HepG2 (cell line): ENCODE measurements at regions of chr5 and their contacts with region 1.

Region 1: GRCh38 chr5:117859176-117859575 is 1129.2 kb downstream of the DTWD2 start:
- DNase-seq: no peak
- ATAC-seq: no peak
- H3K4me3 ChIP-seq: no peak overlapping the region
- H3K27ac ChIP-seq: no peak overlapping the region
- H3K4me1 ChIP-seq: no peaks in the 10 kb centered on the region
- H3K27me3 ChIP-seq: no peaks in the 10 kb centered on the region
- CTCF ChIP-seq: no peak
- EP300 ChIP-seq: no peak
- POLR2A ChIP-seq: no peak
- RAD21 ChIP-seq: no peak

Region 2: GRCh38 chr5:117568622-117569021 is 290.6 kb before region 1 on chr5:
- CTCF ChIA-PET with region 1: no interaction called
- POLR2A ChIA-PET with region 1: no interaction called
- in situ Hi-C with region 1: no loop called
- intact Hi-C with region 1: no loop called
- DNase-seq: no peak
- ATAC-seq: no peak
- H3K4me3 ChIP-seq: no peak overlapping the region
- H3K27ac ChIP-seq: no peak overlapping the region
- H3K4me1 ChIP-seq: no peaks in the 10 kb centered on the region
- H3K27me3 ChIP-seq: no peaks in the 10 kb centered on the region
- CTCF ChIP-seq: no peak
- EP300 ChIP-seq: no peak
- POLR2A ChIP-seq: no peak
- RAD21 ChIP-seq: no peak

Region 3: GRCh38 chr5:117833691-117834090 is 25.5 kb before region 1 on chr5:
- CTCF ChIA-PET with region 1: no interaction called
- POLR2A ChIA-PET with region 1: no interaction called
- in situ Hi-C with region 1: no loop called
- intact Hi-C with region 1: loop called (anchors 1 kb)
- DNase-seq: no peak
- ATAC-seq: no peak
- H3K4me3 ChIP-seq: no peak overlapping the region
- H3K27ac ChIP-seq: no peak overlapping the region
- H3K4me1 ChIP-seq: no peaks in the 10 kb centered on the region
- H3K27me3 ChIP-seq: no peaks in the 10 kb centered on the region
- CTCF ChIP-seq: no peak
- EP300 ChIP-seq: no peak
- POLR2A ChIP-seq: no peak
- RAD21 ChIP-seq: no peak